Endothelial cell of umbilical vein (primary cell): ENCODE measurements at regions of chr5 and their contacts with region 1.

Region 1: GRCh38 chr5:123700398-123701287 is 188.7 kb downstream of the CSNK1G3 start:
- DNase-seq: peak; percentile 99
- H3K4me3 ChIP-seq: no peak overlapping the region
- H3K27ac ChIP-seq: peak overlapping the region; percentile 93
- H3K4me1 ChIP-seq: peaks cover 21% of the 10 kb centered on the region
- H3K27me3 ChIP-seq: no peaks in the 10 kb centered on the region
- CTCF ChIP-seq: no peak
- POLR2A ChIP-seq: peak; percentile 27

Region 2: DNA sequence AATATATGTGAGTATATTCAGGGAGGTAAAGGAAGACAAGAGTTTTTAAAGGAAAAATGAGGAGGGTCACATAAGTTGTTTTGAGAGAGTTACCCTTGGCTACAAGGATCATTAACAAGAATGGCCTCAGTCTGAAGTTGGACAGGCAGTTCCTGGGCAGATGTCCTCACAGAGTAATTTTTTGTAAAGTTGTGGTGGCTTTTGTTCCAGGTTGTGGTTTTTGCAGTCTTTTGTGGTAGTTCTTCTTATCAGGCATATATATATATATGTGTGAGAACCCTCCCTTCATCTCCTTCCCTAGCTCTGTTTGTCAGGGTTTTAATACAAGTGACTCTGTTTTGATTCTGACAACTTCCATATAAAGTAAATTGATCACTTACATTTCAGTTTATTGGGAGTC is 128.7 kb before region 1 on chr5:
- CTCF ChIA-PET with region 1: no interaction called
- POLR2A ChIA-PET with region 1: no interaction called
- dilution Hi-C with region 1: no loop called
- intact Hi-C with region 1: no loop called
- DNase-seq: no peak
- H3K4me3 ChIP-seq: no peak overlapping the region
- H3K27ac ChIP-seq: no peak overlapping the region
- H3K4me1 ChIP-seq: no peaks in the 10 kb centered on the region
- H3K27me3 ChIP-seq: no peaks in the 10 kb centered on the region
- CTCF ChIP-seq: no peak
- POLR2A ChIP-seq: no peak

Region 3: GRCh38 chr5:123671042-123671441 is 29.6 kb before region 1 on chr5:
- CTCF ChIA-PET with region 1: interaction called, 3 read pairs
- POLR2A ChIA-PET with region 1: no interaction called
- dilution Hi-C with region 1: no loop called
- intact Hi-C with region 1: loop called (anchors 2 kb)
- DNase-seq: peak; percentile 68
- H3K4me3 ChIP-seq: no peak overlapping the region
- H3K27ac ChIP-seq: no peak overlapping the region
- H3K4me1 ChIP-seq: no peaks in the 10 kb centered on the region
- H3K27me3 ChIP-seq: no peaks in the 10 kb centered on the region
- CTCF ChIP-seq: peak; percentile 52 to 57
- POLR2A ChIP-seq: no peak

Region 4: DNA sequence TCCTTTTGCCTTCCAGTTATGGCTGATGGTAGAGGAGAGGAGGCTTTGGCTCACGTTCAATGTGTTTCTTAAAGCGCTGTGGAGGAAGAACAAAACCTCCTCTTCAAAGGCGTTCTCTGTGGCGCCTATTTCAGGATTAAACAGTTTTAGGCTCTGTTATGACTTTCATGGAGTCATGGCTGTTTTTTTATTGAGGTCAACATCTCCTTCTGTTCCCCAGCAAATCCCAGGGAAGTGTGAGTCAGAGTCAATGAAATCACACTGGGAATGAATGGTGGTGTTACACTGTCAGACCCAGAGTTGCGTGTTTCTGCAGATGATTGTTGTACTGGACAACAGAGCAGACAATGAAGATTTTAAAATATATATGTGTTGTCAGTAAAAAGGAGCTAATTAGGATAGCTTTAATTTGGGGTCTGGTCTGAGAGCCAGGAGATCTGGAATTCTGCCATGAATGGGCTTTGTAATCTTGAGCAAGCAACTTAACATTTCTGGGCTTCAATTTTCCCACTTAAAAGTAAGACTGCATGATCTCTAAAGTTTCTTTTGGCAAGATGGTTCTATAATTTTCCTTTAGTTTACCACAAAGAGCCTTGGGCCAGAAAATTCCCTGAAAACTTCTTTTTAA is 52.0 kb after region 1 on chr5:
- CTCF ChIA-PET with region 1: no interaction called
- POLR2A ChIA-PET with region 1: no interaction called
- dilution Hi-C with region 1: no loop called
- intact Hi-C with region 1: no loop called
- DNase-seq: peak; percentile 55
- H3K4me3 ChIP-seq: no peak overlapping the region
- H3K27ac ChIP-seq: no peak overlapping the region
- H3K4me1 ChIP-seq: no peaks in the 10 kb centered on the region
- H3K27me3 ChIP-seq: no peaks in the 10 kb centered on the region
- CTCF ChIP-seq: no peak
- POLR2A ChIP-seq: no peak

Region 5: GRCh38 chr5:123813937-123814624 is 113.4 kb after region 1 on chr5:
- CTCF ChIA-PET with region 1: no interaction called
- POLR2A ChIA-PET with region 1: no interaction called
- dilution Hi-C with region 1: no loop called
- intact Hi-C with region 1: loop called (anchors 1 kb)
- DNase-seq: peak; percentile 93
- H3K4me3 ChIP-seq: peak overlapping the region in 1 of 3 experiments; percentile 6
- H3K27ac ChIP-seq: peak overlapping the region; percentile 51
- H3K4me1 ChIP-seq: peaks cover 13% of the 10 kb centered on the region
- H3K27me3 ChIP-seq: no peaks in the 10 kb centered on the region
- CTCF ChIP-seq: no peak
- POLR2A ChIP-seq: no peak

Region 6: GRCh38 chr5:124061663-124062062 is 361.0 kb after region 1 on chr5:
- CTCF ChIA-PET with region 1: no interaction called
- POLR2A ChIA-PET with region 1: no interaction called
- dilution Hi-C with region 1: no loop called
- intact Hi-C with region 1: loop called (anchors 10 kb)
- DNase-seq: no peak
- H3K4me3 ChIP-seq: no peak overlapping the region
- H3K27ac ChIP-seq: no peak overlapping the region
- H3K4me1 ChIP-seq: peaks cover 15% of the 10 kb centered on the region
- H3K27me3 ChIP-seq: no peaks in the 10 kb centered on the region
- CTCF ChIP-seq: no peak
- POLR2A ChIP-seq: no peak

Region 7: DNA sequence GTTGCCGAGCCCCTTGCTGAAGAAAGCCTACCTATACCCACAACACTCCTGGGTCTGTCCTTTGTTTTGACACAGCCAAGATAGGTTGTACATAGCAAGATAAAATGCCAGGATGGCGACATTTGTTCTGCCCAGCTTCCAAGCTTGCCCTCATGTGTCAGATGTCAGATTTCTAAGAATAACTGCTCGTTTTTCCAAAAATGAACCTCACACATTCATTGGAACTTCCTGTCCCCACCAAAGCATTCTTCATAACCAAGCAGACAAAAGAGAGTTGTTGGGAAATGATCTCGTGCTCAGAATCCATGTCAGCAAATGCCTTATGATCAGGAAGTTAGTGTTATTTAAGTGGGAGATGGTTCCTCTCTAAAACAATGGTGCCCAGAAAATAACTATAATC is 835.7 kb after region 1 on chr5:
- CTCF ChIA-PET with region 1: no interaction called
- POLR2A ChIA-PET with region 1: no interaction called
- dilution Hi-C with region 1: no loop called
- intact Hi-C with region 1: loop called (anchors 5 kb)
- DNase-seq: peak; percentile 91
- H3K4me3 ChIP-seq: no peak overlapping the region
- H3K27ac ChIP-seq: peak overlapping the region; percentile 63
- H3K4me1 ChIP-seq: peaks cover 28% of the 10 kb centered on the region
- H3K27me3 ChIP-seq: no peaks in the 10 kb centered on the region
- CTCF ChIP-seq: no peak
- POLR2A ChIP-seq: no peak